ENCODE measurements at regions of chr20 and their contacts with region 1.

Region 1: DNA sequence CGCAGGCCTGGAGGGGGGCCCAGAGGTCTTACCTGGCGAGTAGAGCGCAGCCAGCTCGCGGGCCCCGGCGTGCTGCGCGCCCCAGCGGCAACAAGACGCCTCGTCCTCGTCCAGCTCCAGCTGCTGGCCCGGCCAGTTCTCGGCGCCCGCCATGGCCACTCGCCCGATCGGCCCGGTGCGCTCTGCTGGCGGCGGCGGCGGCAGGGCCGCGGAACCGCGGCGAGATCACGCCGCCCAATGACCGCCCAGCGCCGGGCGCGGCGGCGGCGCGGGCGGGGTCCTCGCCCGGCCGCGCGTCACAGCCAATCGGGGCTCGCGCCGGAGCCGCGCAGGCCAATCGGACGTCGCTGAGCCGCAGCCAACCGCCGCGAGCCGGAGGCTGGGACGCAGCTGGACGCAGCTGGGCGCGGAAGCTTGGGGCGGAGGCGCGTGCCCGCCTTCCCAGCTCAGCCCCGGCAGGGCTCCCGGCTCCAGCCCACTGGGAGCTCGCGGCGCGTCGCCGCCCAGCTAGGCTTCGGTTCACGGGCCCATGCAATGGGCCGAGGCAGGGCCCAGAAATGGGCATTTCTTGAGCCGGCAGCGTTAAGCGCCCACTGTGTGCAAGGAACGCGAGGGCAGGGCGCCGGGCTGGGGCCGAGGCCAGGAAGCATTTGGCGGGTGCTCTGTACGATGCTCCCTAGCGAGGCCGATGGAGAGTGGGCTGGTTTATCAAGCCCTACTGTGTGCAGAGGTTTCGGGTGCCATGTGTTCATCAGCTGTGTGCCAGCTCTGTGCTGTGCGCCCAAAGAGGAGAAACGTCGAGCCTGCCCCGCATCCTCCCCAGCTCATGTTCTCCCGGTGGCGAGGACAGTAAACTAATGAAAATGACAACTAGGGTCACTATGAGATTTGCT is at the start of gene PEDS1:
- DNase-seq: peak; percentile 59 to 93 (median 78)
- ATAC-seq: peak; percentile 95
- H3K4me3 ChIP-seq: peak within 1 kb of the TSS; percentile 96
- H3K4me3 Mint-ChIP-seq: peak within 1 kb of the TSS; percentile 94
- H3K27ac ChIP-seq: peak within 1 kb of the TSS; percentile 70 to 75
- H3K27ac Mint-ChIP-seq: peak within 1 kb of the TSS; percentile 99
- H3K4me1 ChIP-seq: peaks cover 51% of the 10 kb centered on the region
- H3K4me1 Mint-ChIP-seq: peaks cover 51% of the 10 kb centered on the region
- H3K27me3 ChIP-seq: no peaks in the 10 kb centered on the region
- H3K27me3 Mint-ChIP-seq: no peaks in the 10 kb centered on the region
- CTCF ChIP-seq: no peak
- total RNA-seq, gene PEDS1: 21.3 to 21.9 TPM

Region 2: GRCh38 chr20:49915378-49916145 is 238.2 kb before region 1 on chr20 and contains the start of gene SPATA2:
- CTCF ChIA-PET with region 1: no interaction called
- POLR2A ChIA-PET with region 1: no interaction called
- intact Hi-C with region 1: no loop called
- DNase-seq: peak; percentile 85 to 98 (median 91)
- ATAC-seq: peak; percentile 75
- H3K4me3 ChIP-seq: peak within 1 kb of the TSS; percentile 93
- H3K4me3 Mint-ChIP-seq: peak within 1 kb of the TSS; percentile 98
- H3K27ac ChIP-seq: peak within 1 kb of the TSS; percentile 99 to 100
- H3K27ac Mint-ChIP-seq: peak within 1 kb of the TSS; percentile 99
- H3K4me1 ChIP-seq: peaks cover 33% of the 10 kb centered on the region
- H3K4me1 Mint-ChIP-seq: peaks cover 39% of the 10 kb centered on the region
- H3K27me3 ChIP-seq: no peaks in the 10 kb centered on the region
- H3K27me3 Mint-ChIP-seq: no peaks in the 10 kb centered on the region
- CTCF ChIP-seq: no peak
- total RNA-seq, gene SPATA2: 16.0 to 16.4 TPM

Region 3: GRCh38 chr20:49936153-49937027 is 217.3 kb before region 1 on chr20 and contains the start of gene RNF114:
- CTCF ChIA-PET with region 1: no interaction called
- POLR2A ChIA-PET with region 1: interaction called, 7 read pairs
- intact Hi-C with region 1: loop called in 1 of 2 experiments (anchors 2 kb)
- DNase-seq: peak; percentile 84 to 97 (median 90)
- ATAC-seq: peak; percentile 96
- H3K4me3 ChIP-seq: peak within 1 kb of the TSS; percentile 97
- H3K4me3 Mint-ChIP-seq: peak within 1 kb of the TSS; percentile 93
- H3K27ac ChIP-seq: peak within 1 kb of the TSS; percentile 81 to 82
- H3K27ac Mint-ChIP-seq: peak within 1 kb of the TSS; percentile 90
- H3K4me1 ChIP-seq: peaks cover 42% of the 10 kb centered on the region
- H3K4me1 Mint-ChIP-seq: peaks cover 51% of the 10 kb centered on the region
- H3K27me3 ChIP-seq: no peaks in the 10 kb centered on the region
- H3K27me3 Mint-ChIP-seq: no peaks in the 10 kb centered on the region
- CTCF ChIP-seq: no peak
- total RNA-seq, gene RNF114: 129 to 132 TPM

Region 4: DNA sequence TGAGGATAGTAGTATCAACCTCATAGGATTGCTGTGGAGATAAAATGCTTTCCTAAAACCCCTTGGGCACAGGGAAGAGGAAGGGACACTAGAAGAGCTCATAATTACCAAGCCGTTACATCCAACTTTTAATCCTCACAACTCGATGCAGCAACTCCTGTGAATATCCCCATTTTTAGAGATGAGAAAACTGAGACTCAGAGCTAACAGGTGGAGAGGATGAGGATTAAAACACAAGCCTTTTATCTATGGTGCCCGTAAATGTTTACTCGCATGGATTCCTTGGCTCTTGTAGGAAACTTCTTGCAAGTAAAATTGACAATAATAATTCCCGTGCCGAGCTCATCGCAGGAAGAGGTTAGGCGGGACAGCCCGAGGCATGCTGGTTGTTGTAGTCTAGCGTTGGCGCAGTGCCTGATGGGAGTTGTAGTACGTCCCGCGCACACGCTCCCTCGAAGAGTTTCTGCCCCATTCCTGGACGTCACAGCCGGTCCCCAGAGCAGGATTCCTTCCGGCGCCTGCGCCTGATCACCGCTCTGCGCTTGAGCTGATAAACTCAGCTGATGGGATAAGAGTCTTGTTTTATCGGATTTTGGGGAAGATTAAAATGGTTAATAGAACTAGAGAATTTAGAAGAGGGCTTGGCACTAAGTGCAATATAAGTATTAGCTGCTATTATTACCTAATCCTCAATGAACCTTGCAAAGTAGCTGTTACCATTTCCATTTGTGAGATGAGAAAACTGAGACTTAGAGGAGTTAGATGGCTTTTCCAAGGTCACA is 37.9 kb before region 1 on chr20:
- CTCF ChIA-PET with region 1: interaction called, 36 read pairs
- POLR2A ChIA-PET with region 1: interaction called, 47 read pairs
- intact Hi-C with region 1: loop called in 1 of 2 experiments (anchors 2 kb)
- DNase-seq: peak; percentile 82 to 97 (median 88)
- ATAC-seq: peak; percentile 83
- H3K4me3 ChIP-seq: peak overlapping the region; percentile 58
- H3K4me3 Mint-ChIP-seq: peak overlapping the region; percentile 92
- H3K27ac ChIP-seq: no peak overlapping the region
- H3K27ac Mint-ChIP-seq: peak overlapping the region; percentile 85
- H3K4me1 ChIP-seq: peaks cover 53% of the 10 kb centered on the region
- H3K4me1 Mint-ChIP-seq: peaks cover 53% of the 10 kb centered on the region
- H3K27me3 ChIP-seq: no peaks in the 10 kb centered on the region
- H3K27me3 Mint-ChIP-seq: no peaks in the 10 kb centered on the region
- CTCF ChIP-seq: no peak

Region 5: DNA sequence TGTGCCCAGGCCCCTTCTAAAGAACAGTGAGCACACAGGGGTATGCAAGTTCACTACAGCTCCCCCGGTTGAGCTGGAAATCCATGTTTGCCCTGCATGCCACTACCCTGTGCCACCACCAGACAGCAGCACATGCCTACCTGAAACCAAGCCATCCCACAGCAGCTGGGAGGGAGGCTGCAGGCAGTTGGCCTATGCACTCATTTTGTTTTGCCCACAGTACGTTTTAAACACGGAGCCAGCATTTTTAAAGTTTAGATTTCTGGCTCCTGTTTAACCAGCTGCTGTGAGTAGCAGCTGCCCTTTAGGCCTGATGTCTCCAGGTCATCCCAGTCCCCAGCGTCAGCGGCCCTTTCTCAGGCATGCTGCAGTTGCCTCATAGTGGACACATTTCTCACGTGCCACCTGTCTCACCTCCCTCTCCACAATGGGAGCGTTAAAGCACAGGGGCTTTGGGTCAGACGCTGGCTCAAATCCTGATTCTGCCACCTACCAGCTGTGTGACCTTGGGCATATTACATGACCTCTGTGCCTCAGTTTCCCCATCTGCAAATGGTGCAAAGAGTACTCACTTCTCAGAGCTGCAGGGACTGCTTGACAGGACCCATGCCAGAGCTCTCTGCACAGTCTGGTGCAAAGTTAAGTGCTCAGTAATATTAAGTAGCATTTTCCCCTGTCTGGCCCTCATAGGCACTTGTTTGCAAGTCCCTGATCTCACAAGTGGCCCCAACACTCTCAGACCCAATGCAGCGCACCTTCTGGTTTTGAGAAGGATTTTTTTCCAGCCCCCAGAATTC is 32.6 kb before region 1 on chr20:
- CTCF ChIA-PET with region 1: interaction called, 36 read pairs
- POLR2A ChIA-PET with region 1: interaction called, 47 read pairs
- intact Hi-C with region 1: no loop called
- DNase-seq: peak; percentile 48 to 85 (median 62)
- ATAC-seq: peak; percentile 83
- H3K4me3 ChIP-seq: no peak overlapping the region
- H3K4me3 Mint-ChIP-seq: no peak overlapping the region
- H3K27ac ChIP-seq: no peak overlapping the region
- H3K27ac Mint-ChIP-seq: peak overlapping the region; percentile 17
- H3K4me1 ChIP-seq: peaks cover 9% of the 10 kb centered on the region
- H3K4me1 Mint-ChIP-seq: peaks cover 12% of the 10 kb centered on the region
- H3K27me3 ChIP-seq: no peaks in the 10 kb centered on the region
- H3K27me3 Mint-ChIP-seq: no peaks in the 10 kb centered on the region
- CTCF ChIP-seq: peak; percentile 74

Region 6: DNA sequence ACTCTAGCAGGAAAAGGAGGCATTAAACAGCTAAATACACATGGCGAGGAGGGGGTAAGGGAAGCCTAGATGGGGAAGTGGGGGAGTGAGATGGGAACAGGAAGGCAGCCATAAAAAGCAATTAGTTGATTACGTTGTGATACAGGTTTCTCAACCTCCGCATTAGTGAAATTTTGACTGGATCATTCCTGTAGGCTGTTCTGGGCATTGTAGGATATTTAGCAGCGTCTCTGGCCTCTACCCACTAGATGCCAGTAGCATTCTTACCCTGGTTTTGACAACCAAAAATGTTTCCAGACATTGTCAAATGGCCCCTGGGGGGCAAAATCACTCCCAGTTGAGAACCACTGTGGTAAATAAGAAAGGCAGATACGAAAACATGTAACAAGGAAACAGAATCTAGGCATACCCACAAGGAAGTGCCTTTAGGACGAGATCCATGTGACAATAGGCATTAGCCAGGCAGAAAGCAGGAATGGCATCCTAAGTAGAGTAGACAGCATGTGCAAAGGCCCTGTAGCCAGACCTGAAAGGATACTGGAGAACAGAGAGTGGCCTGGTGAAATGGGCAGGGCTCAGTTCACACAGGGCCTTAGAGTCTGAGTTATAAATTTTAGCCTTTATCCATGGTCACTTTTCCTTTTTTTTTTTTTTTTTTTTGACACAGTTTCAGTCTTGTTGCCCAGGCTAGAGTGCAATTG is 330.7 kb after region 1 on chr20:
- CTCF ChIA-PET with region 1: no interaction called
- POLR2A ChIA-PET with region 1: interaction called, 13 read pairs
- intact Hi-C with region 1: no loop called
- DNase-seq: peak in 1 of 14 experiments; percentile 20
- ATAC-seq: no peak
- H3K4me3 ChIP-seq: peak overlapping the region; percentile 60
- H3K4me3 Mint-ChIP-seq: peak overlapping the region; percentile 91
- H3K27ac ChIP-seq: peak overlapping the region in 1 of 2 donors; percentile 82
- H3K27ac Mint-ChIP-seq: peak overlapping the region; percentile 89
- H3K4me1 ChIP-seq: peaks cover 14% of the 10 kb centered on the region
- H3K4me1 Mint-ChIP-seq: peaks cover 25% of the 10 kb centered on the region
- H3K27me3 ChIP-seq: no peaks in the 10 kb centered on the region
- H3K27me3 Mint-ChIP-seq: no peaks in the 10 kb centered on the region
- CTCF ChIP-seq: no peak

Measured in CD4-positive, alpha-beta T cell (primary cell).